ENCODE measurements at regions of chr6 and their contacts with region 1.

Region 1: DNA sequence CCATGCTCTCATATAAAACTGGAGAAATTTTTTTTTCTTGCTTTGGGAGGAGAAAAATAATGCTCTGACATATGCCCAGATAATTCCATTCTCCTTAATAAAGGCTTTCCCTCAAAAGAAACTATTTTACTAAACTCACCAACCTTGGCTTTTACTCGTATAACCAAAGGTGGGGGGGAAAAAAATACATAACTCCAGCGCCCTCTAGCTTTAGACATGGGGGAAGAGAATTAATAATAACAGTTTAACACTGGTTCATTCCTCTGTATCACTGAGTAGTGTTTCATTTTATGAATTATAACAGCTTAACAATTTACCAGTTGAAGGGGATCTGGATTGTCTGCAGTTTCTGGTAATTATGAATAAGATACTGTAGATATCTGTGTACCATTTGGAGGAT is 1226.1 kb downstream of the GRIK2 start:
- DNase-seq: no peak
- H3K4me3 ChIP-seq: no peak overlapping the region
- H3K27ac ChIP-seq: no peak overlapping the region
- H3K4me1 ChIP-seq: no peaks in the 10 kb centered on the region
- H3K27me3 ChIP-seq: no peaks in the 10 kb centered on the region
- CTCF ChIP-seq: peak in 1 of 3 experiments; percentile 40; a peak in 1 of 4 replicates
- EP300 ChIP-seq: no peak
- POLR2A ChIP-seq: no peak
- RAD21 ChIP-seq: peak; percentile 65 to 66

Region 2: DNA sequence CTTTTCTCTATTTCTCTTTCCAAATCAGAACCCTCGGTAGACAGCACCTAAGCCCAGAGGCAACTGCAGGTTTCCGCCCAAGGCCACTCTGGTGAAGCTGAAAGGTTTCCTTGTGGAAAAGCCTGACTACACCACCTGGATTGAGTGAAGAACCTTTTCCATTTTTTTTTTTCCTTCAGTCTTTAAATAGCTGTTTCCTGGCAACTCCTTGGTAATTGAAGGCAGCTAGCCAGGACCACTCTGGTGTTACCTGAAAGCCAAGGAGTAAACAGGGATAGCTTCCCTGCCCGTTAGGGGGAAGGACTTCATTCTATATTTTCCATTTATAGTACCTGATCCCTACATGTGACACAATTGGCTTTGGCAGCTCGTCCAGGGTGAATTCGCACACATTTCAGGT is 12.3 kb after region 1 on chr6:
- CTCF ChIA-PET with region 1: interaction called, 25 read pairs
- POLR2A ChIA-PET with region 1: interaction called, 3 read pairs
- DNase-seq: no peak
- H3K4me3 ChIP-seq: no peak overlapping the region
- H3K27ac ChIP-seq: no peak overlapping the region
- H3K4me1 ChIP-seq: no peaks in the 10 kb centered on the region
- H3K27me3 ChIP-seq: no peaks in the 10 kb centered on the region
- CTCF ChIP-seq: no peak
- EP300 ChIP-seq: no peak
- POLR2A ChIP-seq: no peak
- RAD21 ChIP-seq: no peak

Region 3: GRCh38 chr6:102885165-102885564 is 265.6 kb after region 1 on chr6:
- CTCF ChIA-PET with region 1: no interaction called
- POLR2A ChIA-PET with region 1: no interaction called
- DNase-seq: no peak
- H3K4me3 ChIP-seq: no peak overlapping the region
- H3K27ac ChIP-seq: no peak overlapping the region
- H3K4me1 ChIP-seq: no peaks in the 10 kb centered on the region
- H3K27me3 ChIP-seq: no peaks in the 10 kb centered on the region
- CTCF ChIP-seq: no peak
- EP300 ChIP-seq: no peak
- POLR2A ChIP-seq: no peak
- RAD21 ChIP-seq: no peak

Measured in H1 (cell line).